ENCODE measurements at regions of chr1 and their contacts with region 1.

Region 1: GRCh38 chr1:110209715-110210603 is at the start of gene KCNC4:
- DNase-seq: peak; percentile 61
- H3K4me3 ChIP-seq: peak within 1 kb of the TSS; percentile 50 to 56 (median 51)
- H3K27ac ChIP-seq: no peak within 1 kb of the TSS
- H3K4me1 ChIP-seq: peaks cover 18% of the 10 kb centered on the region
- H3K27me3 ChIP-seq: no peaks in the 10 kb centered on the region
- CTCF ChIP-seq: no peak
- total RNA-seq, gene KCNC4: 5.3 to 6.7 TPM

Region 2: GRCh38 chr1:110114837-110115183 is 95.1 kb before region 1 on chr1:
- CTCF ChIA-PET with region 1: no interaction called
- dilution Hi-C with region 1: no loop called
- in situ Hi-C with region 1: no loop called
- intact Hi-C with region 1: no loop called
- DNase-seq: no peak
- H3K4me3 ChIP-seq: no peak overlapping the region
- H3K27ac ChIP-seq: no peak overlapping the region
- H3K4me1 ChIP-seq: no peaks in the 10 kb centered on the region
- H3K27me3 ChIP-seq: peaks cover 10% of the 10 kb centered on the region
- CTCF ChIP-seq: no peak

Region 3: GRCh38 chr1:110161877-110162276 is 48.1 kb before region 1 on chr1:
- CTCF ChIA-PET with region 1: no interaction called
- dilution Hi-C with region 1: loop called (anchors 5 kb)
- in situ Hi-C with region 1: no loop called
- intact Hi-C with region 1: no loop called
- DNase-seq: no peak
- H3K4me3 ChIP-seq: no peak overlapping the region
- H3K27ac ChIP-seq: no peak overlapping the region
- H3K4me1 ChIP-seq: no peaks in the 10 kb centered on the region
- H3K27me3 ChIP-seq: peaks cover 6% of the 10 kb centered on the region
- CTCF ChIP-seq: no peak

Region 4: GRCh38 chr1:110235834-110236682 is 26.1 kb after region 1 on chr1:
- CTCF ChIA-PET with region 1: no interaction called
- dilution Hi-C with region 1: no loop called
- in situ Hi-C with region 1: no loop called
- intact Hi-C with region 1: no loop called
- DNase-seq: peak; percentile 92
- H3K4me3 ChIP-seq: no peak overlapping the region
- H3K27ac ChIP-seq: peak overlapping the region; percentile 27
- H3K4me1 ChIP-seq: peaks cover 32% of the 10 kb centered on the region
- H3K27me3 ChIP-seq: no peaks in the 10 kb centered on the region
- CTCF ChIP-seq: no peak

Region 5: DNA sequence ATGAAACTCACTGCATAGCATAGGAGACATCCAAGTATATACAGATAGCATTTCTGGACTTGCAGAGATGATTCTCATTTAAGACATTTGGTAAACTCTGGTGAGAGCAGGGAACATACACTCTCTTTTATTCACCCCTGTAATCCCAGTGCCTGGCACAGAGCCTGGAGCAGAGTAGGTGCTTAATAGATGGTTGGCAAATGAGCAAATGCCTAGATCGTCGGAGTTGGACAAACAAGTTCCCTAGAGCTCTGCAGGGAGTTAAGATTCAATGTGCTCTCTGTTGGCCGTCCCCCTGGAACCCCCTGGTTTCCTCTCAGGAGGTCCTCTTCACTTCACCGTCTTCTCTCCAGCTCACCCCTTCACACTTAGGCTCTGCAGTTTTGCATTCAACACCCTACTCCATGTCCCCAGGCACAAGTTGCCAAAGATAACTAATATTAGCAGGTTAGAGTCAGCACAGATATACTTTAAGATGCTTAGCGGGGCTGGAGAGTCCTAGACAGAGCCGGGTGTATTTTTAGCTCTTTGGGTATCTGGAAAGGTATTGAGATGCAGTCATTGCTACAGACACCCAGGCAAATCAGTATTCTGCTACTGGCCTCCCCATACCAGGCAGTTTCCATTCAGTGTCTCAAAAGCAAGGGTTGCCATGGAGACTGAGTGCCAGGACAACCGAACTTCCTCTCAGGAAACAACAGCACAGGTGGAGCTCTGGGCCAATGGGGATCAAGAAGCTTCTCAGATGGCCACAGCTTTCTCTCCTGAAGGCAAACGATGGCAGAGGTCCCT is 45.2 kb after region 1 on chr1:
- CTCF ChIA-PET with region 1: no interaction called
- dilution Hi-C with region 1: no loop called
- in situ Hi-C with region 1: no loop called
- intact Hi-C with region 1: loop called (anchors 5 kb)
- DNase-seq: no peak
- H3K4me3 ChIP-seq: no peak overlapping the region
- H3K27ac ChIP-seq: no peak overlapping the region
- H3K4me1 ChIP-seq: peaks cover 15% of the 10 kb centered on the region
- H3K27me3 ChIP-seq: no peaks in the 10 kb centered on the region
- CTCF ChIP-seq: no peak

Region 6: GRCh38 chr1:110298991-110299390 is 89.0 kb after region 1 on chr1:
- CTCF ChIA-PET with region 1: no interaction called
- dilution Hi-C with region 1: no loop called
- in situ Hi-C with region 1: no loop called
- intact Hi-C with region 1: no loop called
- DNase-seq: no peak
- H3K4me3 ChIP-seq: no peak overlapping the region
- H3K27ac ChIP-seq: no peak overlapping the region
- H3K4me1 ChIP-seq: no peaks in the 10 kb centered on the region
- H3K27me3 ChIP-seq: peaks cover 2% of the 10 kb centered on the region
- CTCF ChIP-seq: no peak

Region 7: GRCh38 chr1:110312188-110313121 is 102.5 kb after region 1 on chr1:
- CTCF ChIA-PET with region 1: interaction called, 29 read pairs
- dilution Hi-C with region 1: loop called (anchors 5 kb)
- in situ Hi-C with region 1: no loop called
- intact Hi-C with region 1: loop called (anchors 1 kb)
- DNase-seq: peak; percentile 49
- H3K4me3 ChIP-seq: no peak overlapping the region
- H3K27ac ChIP-seq: no peak overlapping the region
- H3K4me1 ChIP-seq: peaks cover 20% of the 10 kb centered on the region
- H3K27me3 ChIP-seq: no peaks in the 10 kb centered on the region
- CTCF ChIP-seq: peak; percentile 97 to 99

Region 8: GRCh38 chr1:110460253-110461220 is 250.6 kb after region 1 on chr1:
- CTCF ChIA-PET with region 1: interaction called, 11 read pairs
- dilution Hi-C with region 1: no loop called
- in situ Hi-C with region 1: no loop called
- intact Hi-C with region 1: loop called (anchors 1 kb)
- DNase-seq: peak; percentile 62
- H3K4me3 ChIP-seq: no peak overlapping the region
- H3K27ac ChIP-seq: no peak overlapping the region
- H3K4me1 ChIP-seq: peaks cover 22% of the 10 kb centered on the region
- H3K27me3 ChIP-seq: no peaks in the 10 kb centered on the region
- CTCF ChIP-seq: peak; percentile 98 to 99

Region 9: DNA sequence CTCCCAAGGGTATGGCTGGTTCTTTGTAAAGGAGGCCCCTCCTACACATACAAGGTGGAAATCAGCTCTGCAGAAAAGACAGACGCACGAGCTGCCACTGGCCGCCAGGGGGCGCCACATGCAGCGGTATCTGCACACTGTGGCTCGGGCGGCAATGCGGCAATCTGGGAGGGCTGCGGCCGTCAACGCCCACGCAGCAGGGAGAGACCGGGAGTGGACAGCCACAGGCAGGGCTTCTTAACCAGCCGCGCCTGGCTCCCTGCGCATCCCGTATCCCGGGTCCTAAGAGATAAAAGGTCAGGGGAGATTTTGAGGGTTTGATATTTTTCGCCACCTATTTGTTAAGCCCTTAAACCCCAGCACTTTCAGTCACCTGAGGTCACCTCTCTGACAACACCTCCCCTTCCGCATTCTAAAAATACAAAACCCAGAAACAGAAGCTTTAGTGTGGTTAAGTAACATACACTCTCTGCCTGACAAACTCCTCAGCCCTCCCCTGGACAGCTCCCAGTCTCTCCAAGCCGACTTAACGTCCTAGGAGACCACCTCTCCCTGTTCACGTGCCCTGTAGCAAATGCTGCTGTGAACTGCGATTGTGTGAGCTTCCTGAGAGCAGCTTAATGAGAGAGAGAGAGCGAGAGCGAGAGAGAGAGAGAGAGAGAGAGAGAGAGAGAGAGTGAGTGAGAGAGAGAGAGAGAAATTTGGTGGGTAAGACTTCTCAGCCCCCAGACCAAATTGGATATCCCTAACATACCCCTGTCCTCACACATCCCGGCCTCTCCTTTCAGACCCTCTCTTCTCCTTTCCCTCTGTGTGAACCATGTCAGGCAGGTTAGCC is 409.7 kb after region 1 on chr1:
- CTCF ChIA-PET with region 1: interaction called, 3 read pairs
- dilution Hi-C with region 1: no loop called
- in situ Hi-C with region 1: no loop called
- intact Hi-C with region 1: loop called (anchors 5 kb)
- DNase-seq: peak; percentile 71
- H3K4me3 ChIP-seq: no peak overlapping the region
- H3K27ac ChIP-seq: no peak overlapping the region
- H3K4me1 ChIP-seq: peaks cover 4% of the 10 kb centered on the region
- H3K27me3 ChIP-seq: no peaks in the 10 kb centered on the region
- CTCF ChIP-seq: peak; percentile 89 to 95